Endothelial cell of umbilical vein (primary cell): ENCODE measurements at regions of chr6 and their contacts with region 1.

Region 1: GRCh38 chr6:160137989-160138835 is 16.6 kb downstream of the SLC22A1 start:
- DNase-seq: peak; percentile 56
- H3K4me3 ChIP-seq: no peak overlapping the region
- H3K27ac ChIP-seq: no peak overlapping the region
- H3K4me1 ChIP-seq: no peaks in the 10 kb centered on the region
- H3K27me3 ChIP-seq: no peaks in the 10 kb centered on the region
- CTCF ChIP-seq: peak; percentile 49 to 59
- POLR2A ChIP-seq: no peak

Region 2: GRCh38 chr6:160010067-160010466 is 128.1 kb before region 1 on chr6:
- CTCF ChIA-PET with region 1: no interaction called
- POLR2A ChIA-PET with region 1: no interaction called
- dilution Hi-C with region 1: no loop called
- intact Hi-C with region 1: no loop called
- DNase-seq: no peak
- H3K4me3 ChIP-seq: no peak overlapping the region
- H3K27ac ChIP-seq: no peak overlapping the region
- H3K4me1 ChIP-seq: no peaks in the 10 kb centered on the region
- H3K27me3 ChIP-seq: no peaks in the 10 kb centered on the region
- CTCF ChIP-seq: no peak
- POLR2A ChIP-seq: no peak

Region 3: GRCh38 chr6:160315310-160315709 is 177.1 kb after region 1 on chr6:
- CTCF ChIA-PET with region 1: no interaction called
- POLR2A ChIA-PET with region 1: no interaction called
- dilution Hi-C with region 1: no loop called
- intact Hi-C with region 1: no loop called
- DNase-seq: no peak
- H3K4me3 ChIP-seq: no peak overlapping the region
- H3K27ac ChIP-seq: no peak overlapping the region
- H3K4me1 ChIP-seq: no peaks in the 10 kb centered on the region
- H3K27me3 ChIP-seq: no peaks in the 10 kb centered on the region
- CTCF ChIP-seq: no peak
- POLR2A ChIP-seq: no peak

Region 4: GRCh38 chr6:160455541-160456213 is 317.5 kb after region 1 on chr6:
- CTCF ChIA-PET with region 1: interaction called, 29 read pairs
- POLR2A ChIA-PET with region 1: no interaction called
- dilution Hi-C with region 1: no loop called
- intact Hi-C with region 1: loop called (anchors 1 kb)
- DNase-seq: peak; percentile 43
- H3K4me3 ChIP-seq: no peak overlapping the region
- H3K27ac ChIP-seq: no peak overlapping the region
- H3K4me1 ChIP-seq: no peaks in the 10 kb centered on the region
- H3K27me3 ChIP-seq: no peaks in the 10 kb centered on the region
- CTCF ChIP-seq: peak; percentile 77 to 80
- POLR2A ChIP-seq: no peak

Region 5: GRCh38 chr6:160534050-160534696 is 396.0 kb after region 1 on chr6:
- CTCF ChIA-PET with region 1: interaction called, 24 read pairs
- POLR2A ChIA-PET with region 1: no interaction called
- dilution Hi-C with region 1: no loop called
- intact Hi-C with region 1: loop called (anchors 1 kb)
- DNase-seq: peak; percentile 47
- H3K4me3 ChIP-seq: no peak overlapping the region
- H3K27ac ChIP-seq: no peak overlapping the region
- H3K4me1 ChIP-seq: no peaks in the 10 kb centered on the region
- H3K27me3 ChIP-seq: no peaks in the 10 kb centered on the region
- CTCF ChIP-seq: peak; percentile 71 to 79
- POLR2A ChIP-seq: no peak